Right ventricle myocardium inferior (tissue), 1 donor: ENCODE measurements at regions of chr6 and their contacts with region 1.

Region 1: GRCh38 chr6:137313928-137314855 is 95.0 kb upstream of the IFNGR1 start:
- DNase-seq: peak; percentile 87
- ATAC-seq: peak; percentile 93

Region 2: GRCh38 chr6:137084090-137084489 is 230.1 kb before region 1 on chr6:
- intact Hi-C with region 1: no loop called
- DNase-seq: no peak
- ATAC-seq: no peak

Region 3: GRCh38 chr6:137094411-137095008 is 219.7 kb before region 1 on chr6:
- intact Hi-C with region 1: loop called (anchors 1 kb)
- DNase-seq: no peak
- ATAC-seq: peak; percentile 67

Region 4: GRCh38 chr6:137210903-137211302 is 103.3 kb before region 1 on chr6:
- intact Hi-C with region 1: loop called (anchors 5 kb)
- DNase-seq: no peak
- ATAC-seq: peak; percentile 82

Region 5: GRCh38 chr6:137271245-137272183 is 42.7 kb before region 1 on chr6:
- intact Hi-C with region 1: loop called (anchors 2 kb)
- DNase-seq: no peak
- ATAC-seq: peak; percentile 74

Region 6: DNA sequence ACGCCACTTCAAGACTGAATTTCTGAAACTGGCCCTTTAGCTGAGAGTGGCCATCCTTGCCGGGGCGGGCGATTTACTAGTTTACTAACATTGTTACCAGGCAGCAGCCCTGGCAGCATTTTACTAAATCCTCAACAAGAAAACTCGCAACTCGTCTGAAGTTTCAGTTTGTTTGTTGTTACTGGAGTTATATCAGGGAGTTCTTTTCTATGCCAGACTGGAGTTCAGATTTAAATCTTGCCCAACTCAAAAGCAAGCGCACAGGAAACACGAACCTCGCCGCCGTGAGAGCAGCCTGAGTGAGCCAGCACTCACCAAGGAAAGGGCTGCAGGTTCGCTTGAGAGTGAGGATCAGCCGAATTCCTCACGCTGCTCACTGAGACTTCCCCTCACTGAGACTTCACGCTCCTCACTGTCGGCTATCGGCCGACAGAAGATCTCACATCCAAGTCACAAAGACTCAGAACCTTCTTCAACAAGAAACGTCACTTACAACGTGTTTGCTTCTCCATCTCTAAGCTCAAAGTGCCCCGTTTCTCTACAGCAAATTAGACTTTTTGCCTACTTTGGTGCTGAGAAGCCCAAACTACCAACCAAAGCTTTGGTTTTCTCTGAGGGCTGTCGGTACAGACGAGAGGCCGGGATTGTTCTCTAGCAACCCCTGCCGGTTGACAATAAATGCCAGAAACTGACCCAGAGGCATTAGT is 101.1 kb after region 1 on chr6:
- intact Hi-C with region 1: loop called (anchors 1 kb)
- DNase-seq: peak; percentile 60
- ATAC-seq: peak; percentile 83